Heart right ventricle (tissue), 16 donors: ENCODE measurements at regions of chr5 and their contacts with region 1.

Region 1: GRCh38 chr5:1125030-1125357 is 13.1 kb upstream of the SLC12A7 start:
- DNase-seq: peak; percentile 67 to 87
- ATAC-seq: peak; percentile 40 to 79 (median 65)
- H3K4me3 ChIP-seq: peak overlapping the region in 2 of 10 donors; percentile 15 to 19
- H3K27ac ChIP-seq: peak overlapping the region; percentile 61 to 93 (median 88)
- H3K4me1 ChIP-seq: peaks cover 30 to 98% (median 61%) of the 10 kb centered on the region in 9 donors
- H3K27me3 ChIP-seq: no peaks in the 10 kb centered on the region
- CTCF ChIP-seq: no peak

Region 2: GRCh38 chr5:1105350-1106265 is 19.4 kb before region 1 on chr5:
- intact Hi-C with region 1: loop called in 1 of 10 experiments (anchors 2 kb)
- DNase-seq: no peak
- ATAC-seq: no peak
- H3K4me3 ChIP-seq: peak overlapping the region in 4 of 10 donors; percentile 6 to 42 (median 30)
- H3K27ac ChIP-seq: peak overlapping the region in 9 of 10 donors; percentile 92 to 99 (median 97)
- H3K4me1 ChIP-seq: peaks cover 54 to 100% (median 100%) of the 10 kb centered on the region in 9 donors
- H3K27me3 ChIP-seq: no peaks in the 10 kb centered on the region
- CTCF ChIP-seq: no peak

Region 3: DNA sequence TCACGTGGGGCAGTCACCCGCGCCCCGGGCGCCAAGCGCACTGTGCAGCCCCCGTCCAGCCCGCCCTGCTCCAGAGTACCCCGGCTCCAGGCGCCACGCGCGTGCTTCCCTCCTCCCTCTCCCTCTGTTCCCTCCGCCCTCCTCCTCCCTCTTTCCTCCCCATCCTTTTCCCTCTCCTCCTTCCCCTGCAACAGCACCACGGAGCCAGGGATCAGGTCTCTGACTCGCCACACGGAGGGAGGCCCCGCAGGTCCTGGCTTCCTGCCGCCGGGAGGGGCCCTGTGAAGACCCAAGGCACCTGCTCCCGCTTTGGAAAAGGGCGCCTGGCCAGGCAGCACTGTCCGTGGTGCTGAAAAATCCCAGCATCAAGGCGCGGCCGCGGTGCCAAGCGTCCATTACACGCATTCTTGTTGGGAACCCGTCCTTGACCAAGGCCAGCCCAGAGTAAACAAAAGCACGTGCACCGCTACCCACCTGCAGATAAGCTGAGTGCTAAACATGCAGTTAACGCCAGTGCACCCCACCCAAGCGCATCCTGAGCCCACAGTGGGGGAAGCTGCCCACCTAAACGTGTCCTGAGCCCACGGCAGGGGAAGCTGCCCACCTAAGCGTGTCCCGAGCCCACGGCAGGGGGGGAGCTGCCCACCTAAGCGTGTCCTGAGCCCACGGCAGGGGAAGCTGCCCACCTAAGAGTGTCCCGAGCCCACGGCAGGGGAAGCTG is 121.9 kb after region 1 on chr5:
- intact Hi-C with region 1: no loop called
- DNase-seq: peak; percentile 21 to 48
- ATAC-seq: peak in 5 of 8 donors; percentile 28 to 48 (median 39)
- H3K4me3 ChIP-seq: no peak overlapping the region
- H3K27ac ChIP-seq: no peak overlapping the region
- H3K4me1 ChIP-seq: no peaks in the 10 kb centered on the region
- H3K27me3 ChIP-seq: peaks cover 0 to 83% (median 68%) of the 10 kb centered on the region in 7 donors
- CTCF ChIP-seq: no peak